ENCODE measurements at regions of chr19 and their contacts with region 1.

Region 1: DNA sequence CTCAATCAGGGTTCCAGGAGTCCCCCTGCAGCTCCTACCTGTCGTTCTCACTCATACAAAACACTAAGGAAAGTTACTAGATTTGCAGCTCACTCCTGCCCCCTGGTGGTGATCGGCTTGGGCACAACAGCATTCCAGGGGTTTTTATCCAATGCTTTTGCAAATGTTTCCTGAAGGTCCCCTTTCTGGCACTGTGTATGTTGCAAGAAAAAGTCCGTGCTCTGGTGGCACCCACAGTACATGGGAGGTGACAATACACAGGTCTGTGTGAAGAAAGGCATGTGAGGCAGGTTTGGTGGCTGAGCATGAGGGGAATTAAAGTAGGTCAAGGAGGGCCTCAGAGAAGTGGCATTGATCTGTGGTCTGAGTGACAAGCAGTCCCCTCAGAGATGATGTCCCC is 8.6 kb upstream of the TYK2 start:
- DNase-seq: peak; percentile 88
- ATAC-seq: peak; percentile 85
- H3K4me3 ChIP-seq: no peak overlapping the region
- H3K27ac ChIP-seq: no peak overlapping the region
- H3K4me1 ChIP-seq: no peaks in the 10 kb centered on the region
- H3K27me3 ChIP-seq: no peaks in the 10 kb centered on the region
- CTCF ChIP-seq: peak; percentile 95

Region 2: GRCh38 chr19:10269333-10270179 is 119.4 kb before region 1 on chr19:
- intact Hi-C with region 1: loop called (anchors 2 kb)
- DNase-seq: peak; percentile 94
- ATAC-seq: peak; percentile 81
- H3K4me3 ChIP-seq: peak overlapping the region; percentile 80
- H3K27ac ChIP-seq: peak overlapping the region; percentile 95
- H3K4me1 ChIP-seq: peaks cover 11% of the 10 kb centered on the region
- H3K27me3 ChIP-seq: no peaks in the 10 kb centered on the region
- CTCF ChIP-seq: peak; percentile 95